WTC11 (cell line): ENCODE measurements at regions of chr1 and their contacts with region 1.

Region 1: GRCh38 chr1:227905573-227906487 is 41.9 kb downstream of the WNT9A start:
- DNase-seq: no peak
- ATAC-seq: no peak
- H3K4me3 Mint-ChIP-seq: no peak overlapping the region
- H3K27ac Mint-ChIP-seq: no peak overlapping the region
- H3K4me1 Mint-ChIP-seq: peaks cover 11% of the 10 kb centered on the region
- H3K27me3 Mint-ChIP-seq: no peaks in the 10 kb centered on the region
- CTCF ChIP-seq: no peak

Region 2: DNA sequence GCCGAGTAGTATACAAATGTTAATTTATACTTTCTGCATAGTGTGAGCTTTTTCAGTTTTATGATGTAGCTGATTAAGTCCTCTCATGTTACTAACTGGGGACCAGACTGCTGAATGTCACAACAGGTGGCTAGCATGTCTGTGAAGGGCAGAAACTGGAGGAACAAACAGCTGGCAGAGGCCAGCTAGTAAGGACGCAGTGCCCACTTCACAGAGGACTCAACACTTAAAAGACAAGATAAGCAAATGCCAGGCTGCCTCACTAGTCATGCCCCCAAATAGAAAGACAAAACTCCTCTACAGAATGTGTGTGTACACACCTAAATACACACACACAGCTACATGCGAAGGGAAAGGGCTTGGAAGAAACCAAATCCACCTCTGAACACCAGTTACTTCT is 416.3 kb before region 1 on chr1:
- CTCF ChIA-PET with region 1: no interaction called
- POLR2A ChIA-PET with region 1: no interaction called
- DNase-seq: no peak
- ATAC-seq: no peak
- H3K4me3 Mint-ChIP-seq: no peak overlapping the region
- H3K27ac Mint-ChIP-seq: no peak overlapping the region
- H3K4me1 Mint-ChIP-seq: 0 out of 2 replicates have a peak, but pooled peaks cover 2% of the 10 kb centered on the region
- H3K27me3 Mint-ChIP-seq: 0 out of 2 replicates have a peak, but pooled peaks cover 3% of the 10 kb centered on the region
- CTCF ChIP-seq: no peak

Region 3: DNA sequence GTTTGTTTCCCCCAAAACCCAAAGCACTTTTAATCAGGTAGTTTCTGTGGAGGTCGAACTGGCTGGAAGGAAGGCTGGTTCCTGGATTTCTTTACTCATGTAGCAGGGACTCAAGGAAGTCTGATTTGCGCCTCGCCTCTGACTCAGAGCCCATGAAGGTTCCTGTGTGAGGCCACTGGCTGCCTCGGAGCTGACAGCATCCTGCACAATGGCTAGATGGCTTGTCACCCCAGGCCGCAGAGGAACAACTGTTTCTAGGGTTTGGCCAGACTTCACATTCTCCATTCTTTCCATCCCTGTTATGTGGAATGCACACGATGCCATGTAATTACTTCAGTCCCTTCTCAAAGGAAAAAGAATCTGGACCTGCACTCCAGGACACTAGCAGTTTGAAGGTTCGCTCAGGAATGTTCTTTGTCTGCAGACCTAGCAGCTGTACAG is 129.5 kb before region 1 on chr1:
- CTCF ChIA-PET with region 1: no interaction called
- POLR2A ChIA-PET with region 1: no interaction called
- DNase-seq: no peak
- ATAC-seq: no peak
- H3K4me3 Mint-ChIP-seq: no peak overlapping the region
- H3K27ac Mint-ChIP-seq: no peak overlapping the region; the same call in 1 of the 2 replicates
- H3K4me1 Mint-ChIP-seq: no peaks in the 10 kb centered on the region
- H3K27me3 Mint-ChIP-seq: no peaks in the 10 kb centered on the region
- CTCF ChIP-seq: no peak

Region 4: GRCh38 chr1:227787513-227788270 is 118.1 kb before region 1 on chr1:
- CTCF ChIA-PET with region 1: interaction called, 11 read pairs
- POLR2A ChIA-PET with region 1: no interaction called
- DNase-seq: peak; percentile 95
- ATAC-seq: peak; percentile 90
- H3K4me3 Mint-ChIP-seq: peak overlapping the region; percentile 77
- H3K27ac Mint-ChIP-seq: no peak overlapping the region
- H3K4me1 Mint-ChIP-seq: peaks cover 9% of the 10 kb centered on the region
- H3K27me3 Mint-ChIP-seq: peaks cover 50% of the 10 kb centered on the region
- CTCF ChIP-seq: no peak

Region 5: GRCh38 chr1:227855687-227856086 is 50.1 kb before region 1 on chr1:
- CTCF ChIA-PET with region 1: no interaction called
- POLR2A ChIA-PET with region 1: no interaction called
- DNase-seq: no peak
- ATAC-seq: no peak
- H3K4me3 Mint-ChIP-seq: no peak overlapping the region
- H3K27ac Mint-ChIP-seq: no peak overlapping the region
- H3K4me1 Mint-ChIP-seq: no peaks in the 10 kb centered on the region
- H3K27me3 Mint-ChIP-seq: peaks cover 7% of the 10 kb centered on the region
- CTCF ChIP-seq: no peak